ENCODE measurements at regions of chr12 and their contacts with region 1.

Region 1: DNA sequence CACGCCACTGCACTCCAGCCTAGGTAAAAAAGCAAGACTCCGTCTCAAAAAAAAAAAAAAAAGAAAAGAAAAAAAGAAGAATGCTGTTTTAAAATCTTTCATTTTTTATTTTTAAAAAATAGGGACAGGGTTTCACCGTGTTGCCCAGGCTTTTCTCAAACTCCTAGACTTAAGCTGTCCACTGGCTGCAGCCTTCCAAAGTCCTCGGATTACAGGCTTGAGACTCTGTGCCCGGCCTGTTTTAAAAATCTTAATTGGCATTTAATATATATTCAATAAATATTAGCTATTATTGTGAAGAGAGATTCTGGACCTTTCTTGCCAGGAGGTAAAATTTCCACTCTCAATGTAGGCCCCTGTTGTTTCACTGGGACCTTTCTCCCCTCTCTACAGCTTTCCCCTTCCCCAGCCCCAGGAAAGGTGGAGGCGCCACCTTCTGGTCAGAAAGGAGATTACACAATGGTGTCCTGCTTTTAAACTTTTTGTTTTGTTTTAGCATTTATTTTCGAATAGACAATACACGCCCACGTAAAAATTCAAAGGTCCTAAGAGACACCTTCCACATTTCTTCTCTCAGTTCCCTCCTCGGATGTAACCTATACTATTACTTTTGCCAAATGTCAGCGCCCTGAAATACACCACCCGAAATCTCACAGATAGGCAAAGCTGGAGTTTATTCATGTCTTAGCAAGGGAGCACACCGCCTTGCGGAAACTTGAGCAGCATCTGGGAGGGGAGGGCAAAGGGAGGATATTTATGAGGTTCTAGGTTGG is 23.8 kb upstream of the PHC1 start:
- DNase-seq: peak; percentile 75
- ATAC-seq: peak; percentile 74
- H3K4me3 Mint-ChIP-seq: peak overlapping the region; percentile 72
- H3K27ac Mint-ChIP-seq: no peak overlapping the region
- H3K4me1 Mint-ChIP-seq: peaks cover 3% of the 10 kb centered on the region
- H3K27me3 Mint-ChIP-seq: no peaks in the 10 kb centered on the region

Region 2: DNA sequence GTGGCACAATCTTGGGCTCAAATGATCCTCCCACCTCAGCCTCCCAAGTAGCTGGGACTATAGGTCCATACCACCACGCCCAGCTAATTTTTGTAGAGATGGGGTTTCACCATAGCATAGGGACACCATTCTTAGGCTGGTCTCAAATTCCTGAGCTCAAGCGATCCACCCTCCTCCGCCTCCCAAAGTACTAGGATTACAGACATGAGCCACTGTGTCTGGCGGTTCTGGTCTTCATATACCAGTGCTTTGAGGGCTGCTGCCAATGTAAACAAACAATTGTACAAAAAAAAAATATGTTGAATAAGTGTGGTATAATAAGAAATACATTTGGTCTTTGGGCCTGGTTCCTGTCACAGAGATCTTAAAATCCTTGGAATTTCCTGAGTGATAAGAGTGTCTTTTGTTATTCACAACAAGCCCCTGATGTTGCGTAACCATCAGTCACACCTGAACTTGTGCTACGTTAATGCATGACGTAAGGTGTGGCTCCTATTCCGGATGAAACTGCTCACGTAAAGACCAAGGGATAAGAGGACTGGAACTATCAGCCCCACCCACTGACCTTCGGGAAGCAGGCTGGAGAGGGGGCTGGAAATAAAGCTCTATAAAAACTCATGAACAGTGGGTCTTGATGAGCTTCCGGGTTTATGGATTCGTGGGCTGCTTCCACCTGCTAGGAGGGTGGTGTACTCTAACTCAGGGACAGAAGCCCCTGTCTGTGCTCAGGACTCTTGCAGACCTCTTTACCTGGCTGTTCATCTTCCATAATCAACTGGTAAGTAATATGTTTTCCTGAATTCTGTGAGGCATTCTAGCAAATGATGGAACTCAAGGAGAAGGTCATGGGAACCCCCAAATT is 209.2 kb before region 1 on chr12:
- CTCF ChIA-PET with region 1: interaction called, 14 read pairs
- POLR2A ChIA-PET with region 1: no interaction called
- intact Hi-C with region 1: loop called (anchors 1 kb)
- DNase-seq: no peak
- ATAC-seq: no peak
- H3K4me3 Mint-ChIP-seq: no peak overlapping the region
- H3K27ac Mint-ChIP-seq: no peak overlapping the region
- H3K4me1 Mint-ChIP-seq: no peaks in the 10 kb centered on the region
- H3K27me3 Mint-ChIP-seq: no peaks in the 10 kb centered on the region

Region 3: DNA sequence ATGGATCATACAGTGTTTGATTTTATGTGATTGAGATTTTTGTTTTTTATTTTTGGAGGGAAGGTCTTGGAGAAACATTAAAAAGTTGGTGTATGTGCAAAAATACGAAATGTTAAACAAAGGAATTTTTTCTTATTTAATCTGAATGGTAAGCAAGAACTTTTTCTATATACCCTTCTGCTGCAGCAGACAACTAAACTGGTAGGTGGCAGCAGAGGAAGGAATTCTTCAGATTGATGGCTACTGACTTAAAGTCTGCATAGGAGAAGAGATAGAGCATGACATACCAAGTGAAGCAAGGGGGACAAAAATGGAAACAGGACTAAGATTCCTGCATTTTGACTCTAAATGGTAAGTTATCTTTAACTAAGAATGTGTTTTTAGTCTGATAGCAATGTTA is 110.1 kb before region 1 on chr12:
- CTCF ChIA-PET with region 1: interaction called, 5 read pairs
- POLR2A ChIA-PET with region 1: no interaction called
- intact Hi-C with region 1: loop called in 1 of 2 experiments (anchors 5 kb)
- DNase-seq: no peak
- ATAC-seq: no peak
- H3K4me3 Mint-ChIP-seq: no peak overlapping the region
- H3K27ac Mint-ChIP-seq: no peak overlapping the region
- H3K4me1 Mint-ChIP-seq: no peaks in the 10 kb centered on the region
- H3K27me3 Mint-ChIP-seq: no peaks in the 10 kb centered on the region

Region 4: DNA sequence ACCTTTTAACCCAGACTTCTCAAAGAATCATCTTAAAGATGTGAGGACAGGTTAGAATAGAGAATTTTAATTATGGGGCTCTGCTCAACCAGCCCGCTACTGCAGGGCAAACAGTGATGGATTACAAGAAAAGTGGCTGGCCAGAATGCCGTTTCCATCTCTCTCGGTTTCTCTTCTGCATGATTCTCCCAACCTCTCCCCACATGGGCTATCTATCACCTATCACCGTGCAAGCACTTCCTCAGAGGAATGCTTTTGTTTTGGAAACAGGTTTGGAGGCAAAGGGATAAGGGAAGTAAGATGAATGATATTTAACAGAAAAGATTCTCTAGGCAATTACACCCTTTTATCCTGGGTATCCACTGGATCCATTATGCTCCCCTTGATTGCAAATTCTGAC is 13.6 kb before region 1 on chr12:
- CTCF ChIA-PET with region 1: interaction called, 10 read pairs
- POLR2A ChIA-PET with region 1: no interaction called
- intact Hi-C with region 1: no loop called
- DNase-seq: no peak
- ATAC-seq: no peak
- H3K4me3 Mint-ChIP-seq: no peak overlapping the region
- H3K27ac Mint-ChIP-seq: no peak overlapping the region
- H3K4me1 Mint-ChIP-seq: peaks cover 6% of the 10 kb centered on the region
- H3K27me3 Mint-ChIP-seq: no peaks in the 10 kb centered on the region

Region 5: GRCh38 chr12:9039397-9039977 is 149.0 kb after region 1 on chr12:
- CTCF ChIA-PET with region 1: interaction called, 24 read pairs
- POLR2A ChIA-PET with region 1: no interaction called
- intact Hi-C with region 1: no loop called
- DNase-seq: no peak
- ATAC-seq: peak; percentile 78
- H3K4me3 Mint-ChIP-seq: no peak overlapping the region
- H3K27ac Mint-ChIP-seq: no peak overlapping the region
- H3K4me1 Mint-ChIP-seq: peaks cover 48% of the 10 kb centered on the region
- H3K27me3 Mint-ChIP-seq: no peaks in the 10 kb centered on the region

Measured in activated CD4-positive, alpha-beta T cell treated with anti-CD3 and anti-CD28 coated beads for 36 hours (primary cell).